AG04450 (cell line): ENCODE measurements at regions of chr5 and their contacts with region 1.

Region 1: GRCh38 chr5:99032234-99033013 is 103.6 kb upstream of the CHD1 start:
- DNase-seq: peak; percentile 63
- H3K4me3 ChIP-seq: no peak overlapping the region; the same call in 1 of the 2 replicates
- H3K27ac ChIP-seq: no peak overlapping the region
- H3K27me3 ChIP-seq: no peaks in the 10 kb centered on the region
- CTCF ChIP-seq: peak; percentile 86

Region 2: DNA sequence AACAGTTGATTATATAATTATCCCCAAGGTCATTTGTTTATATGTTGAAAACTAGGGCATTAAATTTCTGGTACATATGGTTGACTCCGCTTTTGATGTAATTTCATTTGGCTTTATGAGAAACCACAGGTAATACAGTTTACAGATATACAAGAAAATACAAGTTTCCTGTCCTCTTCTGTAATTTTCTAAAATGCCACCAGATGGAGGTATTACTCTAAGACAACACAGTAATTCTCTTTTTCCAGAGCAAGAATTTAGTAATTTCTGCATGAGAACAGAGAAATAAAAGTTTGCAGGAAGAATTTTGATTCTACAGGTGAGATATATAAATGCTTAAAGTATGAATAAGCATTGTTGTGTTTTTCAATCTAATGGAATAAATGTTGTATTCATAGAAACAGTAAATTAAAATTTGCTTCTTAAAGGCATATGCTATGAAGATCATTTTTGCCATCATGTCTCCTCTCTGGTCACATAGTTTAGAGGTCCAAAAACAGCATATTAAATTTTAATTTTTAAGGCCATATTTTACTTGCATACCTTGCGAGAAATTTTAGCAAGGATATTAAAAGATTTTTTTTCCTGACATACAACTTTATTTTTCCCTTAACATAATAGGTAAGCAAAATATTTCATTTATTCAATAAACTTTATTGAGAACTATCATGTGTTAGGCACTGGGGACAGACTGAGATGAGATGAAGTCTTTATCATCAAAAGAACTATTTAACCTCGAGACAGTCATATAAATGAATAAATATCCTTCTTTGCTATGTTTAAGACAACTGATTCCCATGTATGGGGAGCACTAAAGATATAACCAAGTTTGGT is 126.3 kb before region 1 on chr5:
- CTCF ChIA-PET with region 1: interaction called, 42 read pairs
- POLR2A ChIA-PET with region 1: no interaction called
- DNase-seq: no peak
- H3K4me3 ChIP-seq: no peak overlapping the region
- H3K27ac ChIP-seq: no peak overlapping the region
- H3K27me3 ChIP-seq: no peaks in the 10 kb centered on the region
- CTCF ChIP-seq: peak; percentile 74

Region 3: DNA sequence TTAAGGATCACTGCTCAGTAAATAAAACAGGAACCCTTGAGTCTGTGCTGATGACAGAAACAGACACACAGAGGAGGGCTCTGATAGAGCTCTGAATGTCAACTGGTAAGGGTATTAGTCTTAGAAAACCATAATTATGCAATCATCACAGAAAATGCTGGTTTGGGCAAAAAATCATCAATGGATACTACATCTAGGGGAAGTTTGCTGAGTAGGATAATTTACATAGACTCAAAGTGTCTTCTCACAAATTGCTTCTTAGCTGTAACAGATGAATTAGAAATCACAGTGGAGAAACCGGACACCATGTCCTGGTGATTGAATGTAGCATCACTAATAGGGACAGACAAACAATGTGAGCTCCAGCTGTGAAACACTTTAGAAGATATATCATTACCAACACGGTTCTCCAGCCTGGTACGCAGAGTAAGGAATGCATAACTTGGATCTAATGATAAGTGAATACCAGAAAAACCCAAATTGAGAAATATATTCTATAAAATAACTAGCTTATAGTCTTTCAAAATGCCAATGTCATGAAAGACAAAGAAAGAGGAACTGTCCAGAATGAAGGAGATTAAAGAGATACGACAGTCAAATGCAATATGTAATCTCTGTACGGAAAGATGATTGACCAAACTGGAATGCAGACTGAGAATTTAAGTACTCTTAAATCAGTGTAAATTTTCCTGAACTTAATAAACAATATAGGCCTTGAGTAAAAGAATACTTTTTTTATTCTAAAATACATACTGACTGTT is 121.0 kb before region 1 on chr5:
- CTCF ChIA-PET with region 1: interaction called, 37 read pairs
- POLR2A ChIA-PET with region 1: no interaction called
- DNase-seq: no peak
- H3K4me3 ChIP-seq: no peak overlapping the region
- H3K27ac ChIP-seq: no peak overlapping the region
- H3K27me3 ChIP-seq: no peaks in the 10 kb centered on the region
- CTCF ChIP-seq: no peak

Region 4: GRCh38 chr5:98923966-98924365 is 108.5 kb before region 1 on chr5:
- CTCF ChIA-PET with region 1: interaction called, 14 read pairs
- POLR2A ChIA-PET with region 1: no interaction called
- DNase-seq: no peak
- H3K4me3 ChIP-seq: no peak overlapping the region
- H3K27ac ChIP-seq: no peak overlapping the region
- H3K27me3 ChIP-seq: no peaks in the 10 kb centered on the region
- CTCF ChIP-seq: no peak

Region 5: GRCh38 chr5:99045871-99046270 is 13.4 kb after region 1 on chr5:
- CTCF ChIA-PET with region 1: interaction called, 19 read pairs
- POLR2A ChIA-PET with region 1: no interaction called
- DNase-seq: no peak
- H3K4me3 ChIP-seq: no peak overlapping the region
- H3K27ac ChIP-seq: no peak overlapping the region
- H3K27me3 ChIP-seq: no peaks in the 10 kb centered on the region
- CTCF ChIP-seq: no peak